ENCODE measurements at regions of chr6 and their contacts with region 1.

Region 1: GRCh38 chr6:14734416-14735340 is 511.2 kb upstream of the JARID2 start:
- DNase-seq: peak; percentile 58
- H3K4me3 Mint-ChIP-seq: peak overlapping the region; percentile 36
- H3K27ac Mint-ChIP-seq: peak overlapping the region; percentile 94
- H3K4me1 Mint-ChIP-seq: peaks cover 91% of the 10 kb centered on the region
- H3K27me3 Mint-ChIP-seq: no peaks in the 10 kb centered on the region

Region 2: DNA sequence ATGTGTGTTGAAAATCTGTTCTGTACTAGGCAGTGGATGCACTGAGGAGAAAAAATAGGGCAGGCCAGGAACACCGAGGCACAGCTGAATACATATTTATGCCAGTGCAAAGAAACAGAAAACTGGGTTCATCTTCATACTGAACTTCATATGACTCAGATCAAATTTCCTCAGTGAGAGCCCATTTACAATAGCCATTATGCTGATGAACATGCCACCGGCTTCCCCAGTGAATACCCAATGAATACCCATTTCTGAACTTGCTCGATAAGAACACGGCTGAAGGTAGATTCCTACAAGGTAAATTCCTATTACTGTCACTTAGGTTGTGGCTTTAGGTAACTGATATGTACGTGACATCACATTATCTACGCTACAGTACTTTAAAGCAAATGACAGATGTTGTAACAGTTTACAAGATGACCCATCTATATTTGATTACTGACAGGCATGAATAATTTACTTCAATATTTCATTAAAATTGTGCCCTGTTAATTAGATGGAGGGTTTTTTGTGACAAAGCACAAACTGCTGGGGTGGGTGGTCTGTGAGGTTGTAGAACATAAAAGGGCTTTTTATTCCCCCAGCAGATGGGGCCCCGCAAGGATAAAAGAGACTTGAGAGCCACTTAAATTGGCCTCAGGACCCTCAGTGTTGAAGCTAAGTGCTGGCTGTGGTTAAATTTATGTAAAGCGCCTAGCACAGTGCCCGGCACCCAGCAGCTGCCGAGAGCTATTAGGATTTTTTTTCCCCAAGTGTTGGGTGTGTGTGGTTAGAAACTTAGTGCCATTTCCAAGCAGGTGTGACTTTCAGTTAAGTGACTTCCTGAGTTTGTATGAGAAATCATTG is 352.6 kb before region 1 on chr6:
- intact Hi-C with region 1: loop called (anchors 5 kb)
- DNase-seq: peak; percentile 1
- H3K4me3 Mint-ChIP-seq: no peak overlapping the region
- H3K27ac Mint-ChIP-seq: no peak overlapping the region
- H3K4me1 Mint-ChIP-seq: peaks cover 39% of the 10 kb centered on the region
- H3K27me3 Mint-ChIP-seq: peaks cover 2% of the 10 kb centered on the region

Region 3: DNA sequence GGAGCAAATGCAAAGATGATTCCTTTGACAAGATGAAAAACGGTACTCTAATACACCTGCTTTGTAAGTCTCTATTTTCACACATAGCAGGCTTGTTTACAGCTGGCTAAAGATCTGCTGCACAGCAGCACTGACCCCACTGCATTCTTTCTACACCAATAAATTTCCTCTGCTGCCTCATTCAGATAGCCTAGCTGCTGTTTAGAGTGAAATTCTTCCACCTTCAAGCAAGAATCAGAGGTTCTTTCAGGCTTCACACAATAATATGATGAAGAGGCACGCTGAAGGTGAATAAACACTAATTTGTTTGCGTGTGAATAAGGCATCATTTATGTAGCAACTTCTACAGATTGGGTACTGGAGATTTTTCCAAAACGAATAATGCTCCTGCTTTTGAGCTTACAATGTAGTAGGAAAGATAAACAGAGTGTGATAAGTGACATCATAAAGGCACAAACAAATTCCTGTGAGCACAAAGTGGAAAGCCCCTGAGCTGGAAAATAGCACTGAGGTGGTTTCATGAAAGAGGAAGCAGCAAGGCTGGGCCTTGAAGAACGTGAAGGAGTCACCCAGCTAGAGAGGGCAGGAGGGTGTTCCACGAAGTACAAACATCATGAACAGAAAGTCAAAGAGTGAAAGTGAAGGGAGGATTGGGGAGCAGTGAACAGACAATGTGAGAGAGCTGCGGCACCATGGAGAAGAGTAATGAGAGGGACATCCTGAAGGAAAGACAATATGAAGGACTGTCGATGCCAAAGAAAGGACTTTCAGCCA is 73.7 kb before region 1 on chr6:
- intact Hi-C with region 1: loop called (anchors 1 kb)
- DNase-seq: peak; percentile 59
- H3K4me3 Mint-ChIP-seq: no peak overlapping the region
- H3K27ac Mint-ChIP-seq: no peak overlapping the region
- H3K4me1 Mint-ChIP-seq: peaks cover 59% of the 10 kb centered on the region
- H3K27me3 Mint-ChIP-seq: peaks cover 16% of the 10 kb centered on the region

Region 4: GRCh38 chr6:14857501-14857900 is 122.8 kb after region 1 on chr6:
- intact Hi-C with region 1: loop called (anchors 1 kb)
- DNase-seq: peak; percentile 42
- H3K4me3 Mint-ChIP-seq: peak overlapping the region; percentile 51
- H3K27ac Mint-ChIP-seq: peak overlapping the region; percentile 96
- H3K4me1 Mint-ChIP-seq: peaks cover 42% of the 10 kb centered on the region
- H3K27me3 Mint-ChIP-seq: no peaks in the 10 kb centered on the region

Region 5: DNA sequence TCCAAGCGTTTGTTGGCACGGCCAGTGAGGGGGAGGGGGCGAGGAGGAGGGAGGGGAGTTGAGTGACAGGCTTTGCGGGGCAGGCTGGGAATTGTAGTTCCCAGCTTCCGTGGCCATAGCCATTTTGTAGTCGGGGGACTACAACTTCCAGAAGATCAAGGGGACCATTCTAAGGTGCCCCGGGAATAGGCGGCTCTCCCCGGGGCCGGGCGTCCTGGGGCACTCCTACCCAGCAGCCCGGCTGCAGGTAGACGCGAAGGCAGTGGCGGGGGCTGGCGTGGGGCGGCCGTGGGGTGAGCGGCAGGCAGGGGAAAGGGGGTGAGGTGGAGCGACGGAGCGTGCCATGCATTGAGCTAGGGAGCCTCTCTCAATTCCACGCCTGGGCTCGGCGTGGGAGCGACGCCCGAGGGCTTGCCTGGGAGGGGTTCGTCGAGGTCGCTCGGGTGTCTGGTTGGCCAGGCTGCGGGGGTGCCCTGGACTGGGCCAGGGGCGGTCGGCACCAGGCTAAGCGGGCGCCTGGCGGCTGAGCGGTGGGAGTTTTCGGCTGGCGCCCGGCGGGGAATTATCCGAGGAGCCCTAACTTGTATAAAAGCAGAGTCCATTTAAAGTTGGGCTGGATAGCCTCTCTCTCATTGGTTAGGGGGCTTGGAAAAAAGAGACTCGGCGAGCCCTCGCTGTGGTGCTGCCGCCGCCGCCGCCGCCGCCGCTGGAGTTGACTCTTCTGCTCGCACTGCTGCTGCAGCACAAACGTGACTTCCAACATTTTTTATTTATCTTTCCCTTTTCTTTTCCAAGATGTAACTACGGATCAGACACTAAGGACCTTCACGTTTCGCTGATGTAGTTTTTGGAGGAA is 510.9 kb after region 1 on chr6 and contains the start of gene JARID2:
- intact Hi-C with region 1: loop called (anchors 2 kb)
- DNase-seq: peak; percentile 92
- H3K4me3 Mint-ChIP-seq: peak within 1 kb of the TSS; percentile 98
- H3K27ac Mint-ChIP-seq: peak within 1 kb of the TSS; percentile 96
- H3K4me1 Mint-ChIP-seq: peaks cover 17% of the 10 kb centered on the region
- H3K27me3 Mint-ChIP-seq: no peaks in the 10 kb centered on the region
- total RNA-seq, gene JARID2: 60.5 and 62.5 TPM in 2 replicates

Region 6: DNA sequence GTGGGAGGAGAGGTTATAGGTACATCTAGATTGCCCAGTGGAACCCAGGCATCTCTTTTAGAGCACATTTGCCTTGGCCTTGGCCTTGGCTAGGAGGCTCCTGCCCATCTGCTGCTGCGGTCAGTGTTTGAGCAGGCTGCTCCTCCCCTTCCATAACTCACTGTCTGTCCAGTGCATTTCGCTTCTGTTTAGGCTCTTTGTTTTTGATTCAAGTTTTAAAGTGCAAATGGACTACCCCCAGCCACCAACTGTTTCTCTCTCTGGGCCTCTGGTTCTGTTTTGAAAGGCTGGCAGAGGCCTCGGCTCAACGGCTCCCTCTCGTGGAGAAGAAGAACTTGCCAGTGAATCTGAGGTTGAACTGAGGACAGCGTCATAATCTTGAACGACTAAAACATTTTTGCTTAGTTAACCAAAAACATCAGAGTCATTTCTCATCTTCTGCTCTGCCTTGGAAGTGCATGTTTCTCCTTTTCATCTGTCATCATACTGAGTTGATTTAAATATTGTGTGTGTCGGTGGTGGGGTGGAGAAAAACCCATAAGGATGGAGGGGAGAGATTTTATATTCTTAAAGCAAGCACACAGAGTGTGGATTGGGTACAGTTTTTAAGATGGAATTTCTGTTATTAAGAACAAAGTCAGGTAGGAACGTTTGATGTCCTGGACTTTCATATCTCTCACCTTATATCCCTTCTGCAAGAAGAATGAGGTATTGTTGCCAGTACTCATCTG is 756.7 kb after region 1 on chr6:
- intact Hi-C with region 1: loop called (anchors 5 kb)
- DNase-seq: peak; percentile 55
- H3K4me3 Mint-ChIP-seq: no peak overlapping the region
- H3K27ac Mint-ChIP-seq: peak overlapping the region; percentile 77
- H3K4me1 Mint-ChIP-seq: peaks cover 31% of the 10 kb centered on the region
- H3K27me3 Mint-ChIP-seq: peaks cover 1% of the 10 kb centered on the region

Measured in activated T-helper 1 cell treated with anti-CD3 and anti-CD28 coated beads, Interleukin-12 subunit alpha, Interleukin-12 subunit beta, Interleukin-2, Interleukin-4 antibody, amounts not matched to agents 30 ng/mL and 10 ng/mL and 1 ng/mL, durations not matched to agents 14 hours and 24 hours and 36 hours (primary cell).